Caco-2 (cell line): ENCODE measurements at regions of chr2 and their contacts with region 1.

Region 1: DNA sequence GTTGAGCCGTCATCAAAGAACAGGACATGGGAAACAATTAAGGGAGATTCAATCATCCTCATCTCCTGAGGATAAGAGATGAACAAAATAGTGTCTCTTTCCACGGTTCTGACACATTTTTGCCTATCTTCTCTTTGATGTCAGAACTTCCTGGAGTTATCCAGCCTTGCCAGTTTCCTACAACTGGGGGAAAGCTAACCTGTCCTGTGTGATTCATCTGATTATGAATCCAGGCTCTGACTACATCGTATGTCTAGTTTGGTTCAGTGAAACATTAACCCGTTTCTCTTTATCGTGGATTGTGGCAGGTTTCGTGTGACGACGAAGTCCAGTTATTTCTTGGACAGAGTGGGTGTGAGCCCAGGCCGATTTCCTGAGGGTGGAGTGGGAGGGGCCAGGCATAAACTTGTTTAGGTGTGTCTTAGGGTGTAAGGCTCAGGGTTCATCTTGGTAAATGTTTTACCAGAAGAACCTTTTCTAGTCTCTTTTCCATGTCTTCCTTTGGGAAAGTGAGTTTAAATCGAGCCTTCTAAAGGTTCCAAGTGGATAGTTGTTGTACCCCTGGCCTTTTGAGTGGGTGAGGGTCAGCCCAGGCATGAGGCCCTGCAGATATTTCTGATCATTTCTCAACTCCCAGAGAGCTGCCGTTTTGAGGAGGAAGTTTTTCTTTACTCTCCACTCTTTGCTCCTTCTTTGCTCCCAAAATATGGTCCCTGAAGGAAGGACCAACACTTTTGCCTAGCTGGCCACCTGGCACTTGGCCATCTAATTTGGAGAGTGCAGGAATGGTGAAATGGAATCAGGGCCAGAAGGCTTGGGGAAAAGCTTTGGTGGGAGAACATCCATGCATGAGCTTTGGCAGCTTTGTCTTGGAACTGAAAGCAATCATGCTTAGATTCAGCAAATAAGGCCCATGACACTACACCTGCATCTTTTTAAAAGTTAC is 50.4 kb upstream of the FZD5 start:
- DNase-seq: peak; percentile 92 to 96
- H3K4me3 ChIP-seq: no peak overlapping the region
- H3K4me3 Mint-ChIP-seq: peak overlapping the region; percentile 75
- H3K27ac Mint-ChIP-seq: peak overlapping the region; percentile 96
- H3K4me1 ChIP-seq: peaks cover 51% of the 10 kb centered on the region
- H3K4me1 Mint-ChIP-seq: peaks cover 20% of the 10 kb centered on the region
- H3K27me3 ChIP-seq: no peaks in the 10 kb centered on the region
- H3K27me3 Mint-ChIP-seq: no peaks in the 10 kb centered on the region
- CTCF ChIP-seq: no peak

Region 2: DNA sequence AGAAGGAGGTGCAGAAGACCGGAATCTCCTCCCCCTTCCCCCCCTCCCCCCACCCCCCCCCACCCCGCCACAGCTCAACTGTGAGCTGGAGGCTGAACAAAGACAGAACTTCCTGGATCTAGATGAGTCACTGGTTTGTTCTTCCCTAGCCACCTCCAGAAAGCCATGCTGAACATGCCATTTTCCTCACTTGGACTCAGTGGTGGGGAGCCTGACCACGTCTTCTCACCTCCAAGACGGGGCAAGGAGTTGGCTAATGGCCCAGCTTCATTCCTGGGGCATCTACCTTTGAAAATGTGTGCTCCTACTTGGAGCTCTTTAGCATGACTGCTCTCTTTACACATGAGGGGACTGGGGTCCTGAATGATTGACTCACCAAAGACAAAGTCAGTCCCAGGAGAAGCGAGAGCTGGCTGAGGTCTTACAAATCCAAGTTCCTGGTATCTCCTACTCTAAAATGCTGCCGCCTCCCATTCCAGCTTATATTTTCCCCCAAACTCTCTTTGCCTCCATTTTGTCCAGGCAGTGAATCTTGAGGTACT is 27.8 kb before region 1 on chr2:
- CTCF ChIA-PET with region 1: no interaction called
- POLR2A ChIA-PET with region 1: interaction called, 11 read pairs
- intact Hi-C with region 1: loop called (anchors 1 kb)
- DNase-seq: peak; percentile 54 to 62
- H3K4me3 ChIP-seq: no peak overlapping the region
- H3K4me3 Mint-ChIP-seq: peak overlapping the region; percentile 34
- H3K27ac Mint-ChIP-seq: peak overlapping the region; percentile 93
- H3K4me1 ChIP-seq: peaks cover 44% of the 10 kb centered on the region
- H3K4me1 Mint-ChIP-seq: peaks cover 27% of the 10 kb centered on the region
- H3K27me3 ChIP-seq: no peaks in the 10 kb centered on the region
- H3K27me3 Mint-ChIP-seq: no peaks in the 10 kb centered on the region
- CTCF ChIP-seq: no peak

Region 3: DNA sequence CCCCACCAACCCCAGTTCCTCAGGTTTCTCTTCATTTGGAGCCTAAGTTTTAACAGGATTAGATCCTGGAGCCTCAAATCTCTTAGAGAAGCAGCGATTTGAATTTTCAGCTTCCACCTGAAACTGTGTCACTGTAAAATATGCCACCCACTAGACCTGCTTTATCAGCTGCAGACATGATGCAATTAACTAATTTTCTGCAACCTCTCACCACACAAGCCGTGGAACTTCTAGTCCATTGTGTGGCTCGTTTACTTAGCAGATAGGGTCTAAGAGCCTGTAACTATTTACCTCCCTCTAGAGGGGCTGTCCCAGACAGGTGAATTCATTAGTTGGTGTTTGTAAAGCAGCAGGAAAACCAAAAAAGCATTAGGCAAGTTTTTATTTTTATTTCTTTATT is 18.9 kb before region 1 on chr2:
- CTCF ChIA-PET with region 1: interaction called, 4 read pairs
- POLR2A ChIA-PET with region 1: interaction called, 10 read pairs
- intact Hi-C with region 1: loop called (anchors 1 kb)
- DNase-seq: peak; percentile 57 to 67
- H3K4me3 ChIP-seq: no peak overlapping the region
- H3K4me3 Mint-ChIP-seq: peak overlapping the region; percentile 25
- H3K27ac Mint-ChIP-seq: peak overlapping the region; percentile 49
- H3K4me1 ChIP-seq: peaks cover 66% of the 10 kb centered on the region
- H3K4me1 Mint-ChIP-seq: peaks cover 33% of the 10 kb centered on the region
- H3K27me3 ChIP-seq: no peaks in the 10 kb centered on the region
- H3K27me3 Mint-ChIP-seq: no peaks in the 10 kb centered on the region
- CTCF ChIP-seq: peak in 1 of 2 experiments; percentile 3

Region 4: DNA sequence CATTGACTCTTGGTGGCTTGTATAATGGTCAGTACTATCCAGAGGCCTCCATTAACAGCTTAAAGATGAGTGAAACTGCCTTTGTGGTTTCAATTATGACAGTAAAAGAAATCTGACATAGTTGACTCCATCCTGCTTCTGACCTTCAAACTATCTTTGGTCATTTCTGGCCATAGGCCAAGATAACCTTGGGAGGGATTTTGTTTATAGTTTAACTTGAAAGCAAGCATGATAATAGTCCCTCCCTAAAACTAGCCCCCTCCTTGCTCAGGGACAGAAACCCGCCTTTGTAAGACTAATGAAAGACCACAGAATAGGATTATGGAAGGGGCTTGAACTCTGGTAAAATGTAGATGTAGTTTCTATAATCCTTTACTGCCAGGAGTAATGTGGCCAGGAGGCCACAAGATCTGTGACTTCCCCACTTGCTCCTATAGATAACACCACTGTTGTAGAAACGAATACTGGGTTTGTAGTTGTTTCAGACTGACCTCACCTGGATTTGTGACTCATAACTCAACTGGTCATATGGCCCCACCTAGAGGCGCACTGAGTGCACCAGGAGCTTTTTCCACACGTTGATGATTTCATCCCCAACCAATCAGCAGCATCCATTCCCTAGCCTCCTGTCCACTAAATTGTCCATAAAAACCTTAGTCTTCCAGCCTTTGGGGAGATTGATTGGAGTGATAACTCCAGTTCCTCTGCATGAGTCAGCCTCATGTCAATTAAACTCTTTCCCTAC is 213.8 kb after region 1 on chr2:
- CTCF ChIA-PET with region 1: no interaction called
- POLR2A ChIA-PET with region 1: no interaction called
- intact Hi-C with region 1: loop called (anchors 2 kb)
- DNase-seq: peak; percentile 82 to 85
- H3K4me3 ChIP-seq: no peak overlapping the region
- H3K4me3 Mint-ChIP-seq: no peak overlapping the region
- H3K27ac Mint-ChIP-seq: peak overlapping the region; percentile 70
- H3K4me1 ChIP-seq: peaks cover 51% of the 10 kb centered on the region
- H3K4me1 Mint-ChIP-seq: peaks cover 39% of the 10 kb centered on the region
- H3K27me3 ChIP-seq: no peaks in the 10 kb centered on the region
- H3K27me3 Mint-ChIP-seq: no peaks in the 10 kb centered on the region
- CTCF ChIP-seq: peak; percentile 36